ENCODE measurements at regions of chr2 and their contacts with region 1.

Region 1: DNA sequence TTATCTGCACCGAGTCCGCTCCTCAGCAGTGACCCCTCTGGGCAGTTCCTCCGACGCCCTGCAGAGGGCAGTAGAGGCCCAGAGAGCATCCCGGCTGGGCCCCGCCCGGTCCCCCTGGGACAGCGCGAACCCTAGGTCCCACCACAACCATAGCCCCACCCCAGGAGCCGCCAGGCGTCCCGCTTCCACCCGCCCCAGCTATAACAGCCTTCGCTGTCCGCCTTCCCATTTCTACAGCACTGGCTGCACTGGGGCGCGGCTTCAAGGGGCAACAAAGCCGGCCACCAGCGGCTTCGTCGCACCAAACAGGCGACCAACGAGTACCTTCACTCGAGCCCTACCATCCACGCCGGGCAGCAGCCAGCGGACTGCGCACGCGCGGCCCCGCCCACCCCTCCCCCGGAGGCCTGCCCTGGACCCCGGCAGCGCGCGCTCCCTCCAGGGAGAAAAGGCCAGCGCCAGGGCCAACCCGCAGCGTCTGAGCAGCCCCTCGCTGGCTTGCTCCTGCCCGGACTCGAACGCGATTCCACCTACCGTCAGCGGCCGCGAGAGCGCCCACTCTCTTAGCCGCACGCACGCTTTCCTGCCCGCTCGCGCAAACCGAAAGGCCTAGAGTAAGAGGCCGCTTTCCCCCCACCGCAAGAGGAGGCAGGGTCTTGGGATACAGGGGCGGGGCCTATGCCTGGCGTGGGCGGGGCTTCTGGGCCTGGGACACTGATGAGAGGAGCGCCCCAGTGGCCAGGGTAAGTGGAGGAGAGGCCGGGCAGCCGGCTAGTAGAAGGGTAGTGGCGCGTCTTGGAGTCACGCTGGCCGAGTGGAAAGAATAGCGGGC is at the start of gene NHEJ1:
- DNase-seq: peak; percentile 77
- H3K4me3 ChIP-seq: peak within 1 kb of the TSS; percentile 59 to 88 (median 84)
- H3K27ac ChIP-seq: peak within 1 kb of the TSS; percentile 87 to 98 (median 97)
- H3K4me1 ChIP-seq: peaks cover 4 to 17% (median 5%) of the 10 kb centered on the region in 3 donors
- H3K27me3 ChIP-seq: no peaks in the 10 kb centered on the region
- CTCF ChIP-seq: peak; percentile 98 to 99 (median 98)
- POLR2A ChIP-seq: peak in 1 of 4 donors; percentile 64
- total RNA-seq, gene NHEJ1: 6.3 to 14.3 (median 9.7) TPM

Region 2: GRCh38 chr2:219218732-219219701 is 58.6 kb after region 1 on chr2 and contains the start of gene ABCB6:
- intact Hi-C with region 1: loop called (anchors 10 kb)
- DNase-seq: peak; percentile 71
- H3K4me3 ChIP-seq: peak within 1 kb of the TSS; percentile 47 to 77 (median 65)
- H3K27ac ChIP-seq: peak within 1 kb of the TSS; percentile 88 to 98 (median 95)
- H3K4me1 ChIP-seq: peaks cover 21 to 46% (median 29%) of the 10 kb centered on the region in 3 donors
- H3K27me3 ChIP-seq: no peaks in the 10 kb centered on the region
- CTCF ChIP-seq: no peak
- POLR2A ChIP-seq: peak in 2 of 4 donors; percentile 20 to 74
- total RNA-seq, gene ABCB6: 22.1 to 45.3 (median 31.6) TPM

Region 3: DNA sequence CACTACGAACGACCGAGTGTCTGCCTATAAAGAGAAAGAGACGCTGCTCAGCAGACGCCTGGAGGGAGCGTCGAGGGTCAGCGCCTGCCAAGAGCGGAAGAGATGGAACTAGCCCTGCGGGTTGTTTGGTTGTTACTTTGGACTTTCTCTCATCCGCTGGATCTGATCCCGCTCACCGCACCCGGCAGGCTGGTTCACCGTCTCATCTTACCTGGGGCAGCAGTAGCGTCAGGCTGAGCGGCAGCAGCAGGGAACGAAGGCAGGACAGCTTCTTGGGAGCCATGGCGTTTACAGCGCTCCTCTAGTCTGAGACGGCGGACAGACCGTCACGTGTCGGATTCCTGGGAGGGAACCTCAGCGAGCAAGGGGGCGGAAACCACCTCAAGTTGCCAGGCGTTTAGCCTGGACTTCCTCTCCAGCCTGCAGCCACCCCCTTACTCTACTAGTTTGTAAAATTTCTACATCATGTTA is 82.9 kb after region 1 on chr2:
- intact Hi-C with region 1: no loop called
- DNase-seq: no peak
- H3K4me3 ChIP-seq: peak overlapping the region in 2 of 4 donors; percentile 27 to 34
- H3K27ac ChIP-seq: peak overlapping the region in 1 of 4 donors; percentile 49
- H3K4me1 ChIP-seq: peaks cover 18 to 38% (median 29%) of the 10 kb centered on the region in 3 donors
- H3K27me3 ChIP-seq: no peaks in the 10 kb centered on the region
- CTCF ChIP-seq: no peak
- POLR2A ChIP-seq: no peak

Region 4: GRCh38 chr2:219294356-219295351 is 134.3 kb after region 1 on chr2:
- intact Hi-C with region 1: loop called (anchors 5 kb)
- DNase-seq: peak; percentile 52
- H3K4me3 ChIP-seq: peak overlapping the region; percentile 37 to 78 (median 56)
- H3K27ac ChIP-seq: peak overlapping the region; percentile 78 to 90 (median 86)
- H3K4me1 ChIP-seq: peaks cover 15 to 32% (median 16%) of the 10 kb centered on the region in 3 donors
- H3K27me3 ChIP-seq: peaks cover 0 to 9% (median 0%) of the 10 kb centered on the region in 4 donors
- CTCF ChIP-seq: peak; percentile 96 to 100 (median 99)
- POLR2A ChIP-seq: peak in 1 of 4 donors; percentile 34

Measured in esophagus squamous epithelium (tissue), 5 donors.